ENCODE measurements at regions of chr2 and their contacts with region 1.

Region 1: GRCh38 chr2:58539973-58540372 is 298.8 kb upstream of the FANCL start:
- DNase-seq: no peak
- ATAC-seq: no peak
- H3K4me3 ChIP-seq: no peak overlapping the region
- H3K4me3 Mint-ChIP-seq: no peak overlapping the region
- H3K27ac ChIP-seq: no peak overlapping the region
- H3K27ac Mint-ChIP-seq: no peak overlapping the region
- H3K4me1 ChIP-seq: no peaks in the 10 kb centered on the region
- H3K4me1 Mint-ChIP-seq: no peaks in the 10 kb centered on the region
- H3K27me3 ChIP-seq: no peaks in the 10 kb centered on the region
- H3K27me3 Mint-ChIP-seq: no peaks in the 10 kb centered on the region
- CTCF ChIP-seq: no peak

Region 2: DNA sequence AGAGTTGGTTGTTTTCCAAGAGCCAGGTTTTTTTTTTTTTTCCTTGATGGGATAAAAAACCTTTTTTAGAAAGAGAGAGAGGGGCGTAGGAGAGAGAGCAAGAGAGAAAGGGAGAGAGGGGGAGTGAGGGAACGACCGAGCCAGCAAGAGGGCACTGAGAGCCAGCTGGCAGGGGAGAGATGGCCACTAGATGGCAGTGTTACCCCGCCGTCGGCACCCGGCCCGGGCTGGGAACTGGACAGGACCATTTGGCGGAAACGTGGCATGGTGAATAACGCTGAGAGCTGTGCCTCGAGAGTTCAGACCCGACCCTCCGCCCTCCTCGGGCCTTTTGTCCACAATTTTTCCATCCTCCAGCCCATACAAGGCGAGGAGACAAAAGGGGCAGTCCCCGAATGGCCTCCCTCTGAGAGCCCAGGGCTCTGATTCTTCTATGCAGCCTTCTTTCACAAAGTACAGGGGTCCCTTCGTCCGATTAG is 780.1 kb before region 1 on chr2:
- CTCF ChIA-PET with region 1: no interaction called
- POLR2A ChIA-PET with region 1: no interaction called
- intact Hi-C with region 1: loop called in 1 of 2 experiments (anchors 5 kb)
- DNase-seq: peak; percentile 46 to 87 (median 65)
- ATAC-seq: peak; percentile 46
- H3K4me3 ChIP-seq: no peak overlapping the region
- H3K4me3 Mint-ChIP-seq: no peak overlapping the region
- H3K27ac ChIP-seq: no peak overlapping the region
- H3K27ac Mint-ChIP-seq: no peak overlapping the region
- H3K4me1 ChIP-seq: no peaks in the 10 kb centered on the region
- H3K4me1 Mint-ChIP-seq: peaks cover 4% of the 10 kb centered on the region
- H3K27me3 ChIP-seq: no peaks in the 10 kb centered on the region
- H3K27me3 Mint-ChIP-seq: peaks cover 4% of the 10 kb centered on the region
- CTCF ChIP-seq: peak; percentile 89

Region 3: GRCh38 chr2:59957504-59957903 is 1417.5 kb after region 1 on chr2:
- CTCF ChIA-PET with region 1: no interaction called
- POLR2A ChIA-PET with region 1: no interaction called
- intact Hi-C with region 1: no loop called
- DNase-seq: no peak
- ATAC-seq: no peak
- H3K4me3 ChIP-seq: no peak overlapping the region
- H3K4me3 Mint-ChIP-seq: no peak overlapping the region
- H3K27ac ChIP-seq: no peak overlapping the region
- H3K27ac Mint-ChIP-seq: no peak overlapping the region
- H3K4me1 ChIP-seq: no peaks in the 10 kb centered on the region
- H3K4me1 Mint-ChIP-seq: no peaks in the 10 kb centered on the region
- H3K27me3 ChIP-seq: no peaks in the 10 kb centered on the region
- H3K27me3 Mint-ChIP-seq: no peaks in the 10 kb centered on the region
- CTCF ChIP-seq: no peak